ENCODE measurements at regions of chr1 and their contacts with region 1.

Region 1: GRCh38 chr1:147627435-147628110 is 42.8 kb downstream of the ACP6 start:
- DNase-seq: peak; percentile 34 to 41
- ATAC-seq: peak; percentile 33 to 79 (median 72)
- H3K4me3 ChIP-seq: no peak overlapping the region
- H3K27ac ChIP-seq: no peak overlapping the region
- H3K4me1 ChIP-seq: peaks cover 0 to 34% (median 0%) of the 10 kb centered on the region in 9 donors
- H3K27me3 ChIP-seq: no peaks in the 10 kb centered on the region
- CTCF ChIP-seq: peak; percentile 87 to 95 (median 92)

Region 2: DNA sequence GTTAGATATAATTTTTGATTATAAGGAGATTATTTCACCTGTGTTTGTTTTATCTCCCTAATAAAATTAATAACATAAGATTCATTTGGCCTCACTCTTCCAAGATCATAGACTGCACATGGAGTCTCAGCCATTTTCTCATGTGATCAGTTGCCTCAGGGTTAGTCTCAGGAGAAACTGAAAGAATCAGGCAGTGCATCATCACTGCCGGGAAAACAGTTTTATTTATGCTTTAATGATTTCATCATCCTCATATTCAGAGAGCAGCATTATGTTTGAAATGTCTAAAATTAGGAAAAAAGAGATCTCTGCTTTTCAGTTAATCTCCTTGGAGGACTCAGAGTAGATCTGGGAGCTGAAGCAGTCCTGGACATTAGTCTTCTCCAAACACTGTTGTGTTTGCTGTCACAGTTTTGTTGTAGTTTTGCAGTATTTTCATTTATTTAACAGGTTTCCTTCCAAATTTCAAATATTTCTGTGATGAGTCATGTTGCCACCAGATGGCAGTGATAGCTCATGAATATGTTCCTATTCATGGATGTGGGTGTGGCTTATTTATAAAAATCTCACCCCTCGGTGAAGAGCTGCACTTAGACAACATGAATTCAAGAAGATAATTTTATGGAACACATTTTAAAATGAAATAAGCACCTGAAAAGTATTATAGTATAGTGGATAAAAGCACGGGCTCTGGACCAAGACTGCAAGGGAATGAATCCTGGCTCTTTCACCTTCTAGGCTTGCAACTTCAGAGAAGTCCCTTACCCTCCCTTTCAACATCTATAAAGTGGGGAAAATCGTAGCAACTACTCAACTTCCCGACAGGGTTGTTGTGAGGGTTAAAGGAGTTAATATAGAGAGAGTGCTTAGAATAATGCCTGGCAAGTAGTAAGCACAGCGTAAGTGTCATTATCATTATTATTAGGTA is 353.9 kb before region 1 on chr1:
- intact Hi-C with region 1: loop called in 1 of 10 experiments (anchors 5 kb)
- DNase-seq: peak in 1 of 2 donors; percentile 40
- ATAC-seq: peak in 7 of 8 donors; percentile 38 to 82 (median 70)
- H3K4me3 ChIP-seq: no peak overlapping the region
- H3K27ac ChIP-seq: peak overlapping the region in 4 of 10 donors; percentile 18 to 66 (median 40)
- H3K4me1 ChIP-seq: peaks cover 0 to 18% (median 5%) of the 10 kb centered on the region in 9 donors
- H3K27me3 ChIP-seq: no peaks in the 10 kb centered on the region
- CTCF ChIP-seq: peak; percentile 14 to 73 (median 63)

Region 3: DNA sequence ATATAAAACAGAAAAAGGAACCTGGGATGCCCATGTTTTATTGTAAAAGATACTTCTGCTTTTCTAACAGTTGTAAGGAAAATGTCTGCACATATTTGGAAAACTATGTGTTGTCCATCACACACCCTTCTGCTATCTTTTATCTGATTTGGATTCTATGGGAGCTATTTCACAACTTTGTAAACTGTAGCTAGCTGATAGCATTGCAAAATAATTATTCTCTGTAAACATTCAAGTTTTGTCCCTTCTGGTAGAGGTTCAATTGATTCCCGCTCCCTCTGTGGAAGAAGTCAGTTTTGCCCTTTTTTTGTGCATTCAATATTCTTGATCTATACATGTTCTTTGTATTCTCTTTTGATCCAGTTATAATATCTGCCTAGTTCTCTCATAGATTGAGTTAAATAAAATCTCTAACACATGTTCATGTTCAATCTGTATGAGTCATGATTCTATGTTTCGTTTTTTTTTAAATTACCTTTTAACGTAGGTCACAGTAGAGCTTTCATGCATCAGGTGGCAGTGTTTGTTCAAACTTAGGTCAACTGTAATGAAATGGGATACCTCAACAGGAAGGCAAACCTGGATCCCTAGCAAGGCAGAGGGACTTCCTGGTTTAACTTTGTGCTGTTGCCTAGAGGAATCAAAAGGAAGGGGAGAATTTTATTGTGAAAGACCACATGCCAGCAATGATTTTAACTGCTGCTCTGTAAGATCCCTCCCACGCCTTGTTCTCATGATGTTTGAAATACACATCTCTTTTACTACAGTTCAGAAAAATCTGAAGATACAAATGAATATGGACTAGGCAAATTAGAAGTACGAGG is 112.3 kb before region 1 on chr1:
- intact Hi-C with region 1: loop called in 3 of 10 experiments (anchors 1 to 5 kb)
- DNase-seq: no peak
- ATAC-seq: peak in 7 of 8 donors; percentile 63 to 86 (median 78)
- H3K4me3 ChIP-seq: no peak overlapping the region
- H3K27ac ChIP-seq: peak overlapping the region in 8 of 10 donors; percentile 37 to 84 (median 61)
- H3K4me1 ChIP-seq: peaks cover 3 to 45% (median 27%) of the 10 kb centered on the region in 9 donors
- H3K27me3 ChIP-seq: no peaks in the 10 kb centered on the region
- CTCF ChIP-seq: peak in 6 of 9 donors; percentile 23 to 56 (median 44)

Region 4: DNA sequence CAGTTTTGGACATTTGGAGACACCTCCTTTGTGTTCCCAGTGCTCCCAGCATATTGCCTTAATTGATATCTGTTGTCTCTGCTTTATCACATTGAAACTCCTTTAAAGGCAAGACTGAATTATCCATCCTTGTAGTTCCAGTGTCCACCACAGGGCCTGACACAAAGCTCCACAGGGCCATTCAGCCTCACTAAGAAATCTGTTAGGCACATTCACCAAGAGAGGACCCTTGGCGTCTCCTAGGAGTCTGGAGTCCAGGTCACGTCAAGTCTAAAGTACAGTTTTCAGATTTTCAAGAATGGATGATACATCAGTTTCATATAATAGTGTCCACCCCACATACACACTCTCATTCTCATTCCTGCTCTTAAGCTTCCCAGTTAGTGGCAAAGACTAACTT is 37.9 kb after region 1 on chr1:
- intact Hi-C with region 1: loop called in 1 of 10 experiments (anchors 2 kb)
- DNase-seq: no peak
- ATAC-seq: no peak
- H3K4me3 ChIP-seq: no peak overlapping the region
- H3K27ac ChIP-seq: no peak overlapping the region
- H3K4me1 ChIP-seq: peaks cover 0 to 15% (median 9%) of the 10 kb centered on the region in 9 donors
- H3K27me3 ChIP-seq: no peaks in the 10 kb centered on the region
- CTCF ChIP-seq: peak in 1 of 9 donors; percentile 17

Region 5: GRCh38 chr1:147904726-147905125 is 277.2 kb after region 1 on chr1:
- intact Hi-C with region 1: no loop called
- DNase-seq: no peak
- ATAC-seq: no peak
- H3K4me3 ChIP-seq: no peak overlapping the region
- H3K27ac ChIP-seq: no peak overlapping the region
- H3K4me1 ChIP-seq: no peaks in the 10 kb centered on the region
- H3K27me3 ChIP-seq: peaks cover 0 to 8% (median 0%) of the 10 kb centered on the region in 7 donors
- CTCF ChIP-seq: no peak